Calu3 (cell line): ENCODE measurements at regions of chr17 and their contacts with region 1.

Region 1: DNA sequence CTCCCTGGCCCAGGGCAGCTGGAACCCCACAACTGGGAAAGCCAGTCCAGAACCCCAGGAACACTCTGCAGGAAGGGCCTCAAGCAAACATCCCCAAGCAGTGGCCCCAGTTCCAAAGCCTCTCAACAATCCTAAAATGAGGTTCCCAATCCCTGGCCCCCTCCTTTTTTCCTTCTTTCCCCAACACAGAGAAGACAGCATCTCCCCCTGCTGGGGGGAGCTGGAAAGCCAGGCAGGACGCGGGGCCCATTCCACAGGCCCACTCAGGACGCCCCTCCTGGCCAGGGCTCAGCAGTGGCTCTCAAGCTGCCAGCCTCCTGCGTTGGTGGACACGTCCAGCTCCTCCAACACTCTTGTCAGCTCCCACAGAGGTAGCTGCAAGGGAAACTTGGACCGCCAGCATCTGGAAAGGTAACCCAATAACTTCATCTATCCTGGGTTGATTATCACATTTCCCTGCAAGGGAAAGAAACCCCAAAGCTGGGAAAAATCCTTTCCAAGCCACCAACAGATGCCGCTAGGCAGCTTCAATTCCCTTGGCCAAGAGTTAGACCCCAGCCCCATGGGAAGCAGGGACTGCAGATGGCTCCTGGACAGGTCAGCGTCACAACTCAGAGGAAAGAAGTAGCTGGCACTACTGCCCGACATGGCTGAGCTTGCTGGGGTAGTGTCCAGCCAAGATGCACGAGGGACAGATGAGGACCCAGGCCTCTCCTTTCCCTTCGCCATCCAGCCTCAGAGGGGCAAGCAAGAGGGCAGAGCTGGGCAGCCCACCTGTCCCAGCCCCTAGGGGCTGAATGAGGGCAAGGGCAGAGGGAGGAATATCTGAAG is 7.6 kb downstream of the HDAC5 start:
- DNase-seq: peak; percentile 70
- H3K4me3 Mint-ChIP-seq: no peak overlapping the region
- H3K27ac Mint-ChIP-seq: no peak overlapping the region
- H3K4me1 Mint-ChIP-seq: no peaks in the 10 kb centered on the region
- H3K27me3 Mint-ChIP-seq: no peaks in the 10 kb centered on the region
- CTCF ChIP-seq: peak; percentile 91

Region 2: DNA sequence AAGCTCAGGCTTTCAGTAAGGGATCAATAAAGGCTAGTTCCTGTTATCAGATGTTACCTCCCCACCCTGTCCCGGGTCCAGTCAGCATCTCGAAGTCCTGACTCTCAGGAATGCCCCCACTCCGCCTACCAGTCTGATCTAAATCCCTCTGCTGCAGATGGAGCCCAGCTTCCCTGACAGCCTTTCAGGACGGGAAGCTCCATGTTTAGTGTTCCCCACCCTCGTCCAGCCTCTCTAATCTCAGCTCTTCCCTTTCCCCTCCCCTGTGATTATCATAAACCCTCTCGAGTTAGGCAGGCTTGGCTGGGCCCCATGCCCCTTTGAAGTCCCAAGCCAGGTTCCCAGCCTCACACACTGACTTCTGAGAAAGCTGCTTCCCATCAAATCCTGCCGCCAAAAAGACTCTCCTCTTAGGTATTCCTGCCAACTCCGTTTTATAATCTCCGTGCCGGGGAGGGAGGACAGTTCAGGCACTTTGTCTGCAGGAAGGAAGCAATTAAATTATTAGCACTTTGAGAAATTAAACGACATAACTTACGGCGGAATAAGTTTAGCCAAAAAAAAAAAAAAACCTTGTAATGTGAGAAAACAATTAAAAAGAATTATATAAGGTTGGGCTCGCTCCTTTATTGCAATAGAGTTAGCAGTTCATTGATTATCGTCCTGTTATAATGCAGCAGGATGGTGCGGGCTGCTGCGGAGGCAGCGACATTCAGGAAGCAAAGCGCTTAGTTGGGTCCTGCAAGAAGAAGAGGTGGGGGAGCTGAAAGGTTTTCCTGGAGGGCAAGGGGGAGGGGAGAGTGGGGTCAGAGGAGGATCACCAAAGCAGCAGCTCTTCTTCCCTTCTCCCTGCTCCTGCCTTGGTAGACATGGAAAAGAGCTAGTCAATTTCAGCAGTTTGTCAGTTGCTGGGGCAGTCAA is 552.9 kb before region 1 on chr17:
- CTCF ChIA-PET with region 1: no interaction called
- intact Hi-C with region 1: no loop called
- DNase-seq: no peak
- H3K4me3 Mint-ChIP-seq: no peak overlapping the region
- H3K27ac Mint-ChIP-seq: no peak overlapping the region
- H3K4me1 Mint-ChIP-seq: no peaks in the 10 kb centered on the region
- H3K27me3 Mint-ChIP-seq: peaks cover 26% of the 10 kb centered on the region
- CTCF ChIP-seq: no peak

Region 3: GRCh38 chr17:43907425-43907981 is 208.3 kb before region 1 on chr17 and contains the start of gene MPP2:
- CTCF ChIA-PET with region 1: no interaction called
- intact Hi-C with region 1: no loop called
- DNase-seq: peak; percentile 57
- H3K4me3 Mint-ChIP-seq: peak within 1 kb of the TSS; percentile 50
- H3K27ac Mint-ChIP-seq: no peak within 1 kb of the TSS
- H3K4me1 Mint-ChIP-seq: peaks cover 14% of the 10 kb centered on the region
- H3K27me3 Mint-ChIP-seq: peaks cover 73% of the 10 kb centered on the region
- CTCF ChIP-seq: peak; percentile 34
- total RNA-seq, gene MPP2: 5.5 and 6.7 TPM in 2 replicates

Region 4: GRCh38 chr17:44084131-44084544 is 31.7 kb before region 1 on chr17:
- CTCF ChIA-PET with region 1: interaction called, 19 read pairs
- intact Hi-C with region 1: loop called (anchors 2 kb)
- DNase-seq: peak; percentile 62
- H3K4me3 Mint-ChIP-seq: no peak overlapping the region
- H3K27ac Mint-ChIP-seq: no peak overlapping the region
- H3K4me1 Mint-ChIP-seq: peaks cover 13% of the 10 kb centered on the region
- H3K27me3 Mint-ChIP-seq: no peaks in the 10 kb centered on the region
- CTCF ChIP-seq: peak; percentile 77